ENCODE measurements at regions of chr6 and their contacts with region 1.

Region 1: GRCh38 chr6:24666641-24667377 is at the starts of genes ACOT13 and TDP2:
- DNase-seq: peak; percentile 83 to 95
- ATAC-seq: peak; percentile 88 to 91
- H3K4me3 ChIP-seq: peak within 1 kb of the TSS; percentile 92
- H3K27ac ChIP-seq: peak within 1 kb of the TSS; percentile 96 to 99
- H3K4me1 ChIP-seq: peaks cover 43% of the 10 kb centered on the region
- CTCF ChIP-seq: no peak; the same call in 2 of the 3 replicates
- EP300 ChIP-seq: no peak
- POLR2A ChIP-seq: peak; percentile 81
- RAD21 ChIP-seq: peak; percentile 12 to 37; a peak in 3 of 5 replicates
- polyA plus RNA-seq, gene ACOT13: 77.7 and 87.7 TPM in 2 replicates
- polyA plus RNA-seq, gene TDP2: 69.7 and 91.7 TPM in 2 replicates

Region 2: DNA sequence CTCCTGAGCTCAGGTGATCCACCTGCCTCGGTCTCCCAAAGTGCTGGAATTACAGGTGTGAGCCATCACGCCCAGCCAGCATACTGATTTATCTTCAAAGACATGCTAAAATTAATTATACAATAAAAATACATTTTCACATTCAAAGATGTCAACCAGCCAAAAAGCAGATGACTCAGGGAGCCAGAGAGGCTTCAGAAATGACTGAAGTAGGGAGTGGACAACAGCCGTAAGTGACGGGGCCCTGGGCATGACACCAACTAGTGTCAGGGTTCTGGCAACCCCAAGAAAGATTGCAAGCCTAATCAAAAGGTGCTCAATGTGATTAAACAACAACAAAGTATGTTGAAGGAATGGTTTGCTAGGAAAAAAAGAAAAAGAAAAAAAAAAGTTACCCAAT is 205.8 kb before region 1 on chr6:
- CTCF ChIA-PET with region 1: no interaction called
- POLR2A ChIA-PET with region 1: no interaction called
- DNase-seq: no peak
- ATAC-seq: no peak
- H3K4me3 ChIP-seq: no peak overlapping the region
- H3K27ac ChIP-seq: no peak overlapping the region
- H3K4me1 ChIP-seq: no peaks in the 10 kb centered on the region
- CTCF ChIP-seq: no peak
- EP300 ChIP-seq: no peak
- POLR2A ChIP-seq: no peak
- RAD21 ChIP-seq: no peak

Region 3: GRCh38 chr6:24520929-24521546 is 145.8 kb before region 1 on chr6:
- CTCF ChIA-PET with region 1: no interaction called
- POLR2A ChIA-PET with region 1: no interaction called
- DNase-seq: peak; percentile 48 to 63
- ATAC-seq: peak; percentile 99
- H3K4me3 ChIP-seq: no peak overlapping the region
- H3K27ac ChIP-seq: no peak overlapping the region
- H3K4me1 ChIP-seq: no peaks in the 10 kb centered on the region
- CTCF ChIP-seq: peak; percentile 50
- EP300 ChIP-seq: no peak
- POLR2A ChIP-seq: no peak
- RAD21 ChIP-seq: peak; percentile 37 to 38; a peak in 3 of 5 replicates

Region 4: GRCh38 chr6:24646782-24647181 is 20.0 kb before region 1 on chr6:
- CTCF ChIA-PET with region 1: no interaction called
- POLR2A ChIA-PET with region 1: interaction called, 15 read pairs
- DNase-seq: peak in 1 of 2 experiments; percentile 39
- ATAC-seq: peak; percentile 58 to 60; a peak in 5 of 6 replicates
- H3K4me3 ChIP-seq: no peak overlapping the region
- H3K27ac ChIP-seq: peak overlapping the region; percentile 86 to 92
- H3K4me1 ChIP-seq: peaks cover 41% of the 10 kb centered on the region
- CTCF ChIP-seq: no peak
- EP300 ChIP-seq: no peak
- POLR2A ChIP-seq: no peak
- RAD21 ChIP-seq: no peak